Aorta (tissue), 5 donors: ENCODE measurements at regions of chr5 and their contacts with region 1.

Region 1: DNA sequence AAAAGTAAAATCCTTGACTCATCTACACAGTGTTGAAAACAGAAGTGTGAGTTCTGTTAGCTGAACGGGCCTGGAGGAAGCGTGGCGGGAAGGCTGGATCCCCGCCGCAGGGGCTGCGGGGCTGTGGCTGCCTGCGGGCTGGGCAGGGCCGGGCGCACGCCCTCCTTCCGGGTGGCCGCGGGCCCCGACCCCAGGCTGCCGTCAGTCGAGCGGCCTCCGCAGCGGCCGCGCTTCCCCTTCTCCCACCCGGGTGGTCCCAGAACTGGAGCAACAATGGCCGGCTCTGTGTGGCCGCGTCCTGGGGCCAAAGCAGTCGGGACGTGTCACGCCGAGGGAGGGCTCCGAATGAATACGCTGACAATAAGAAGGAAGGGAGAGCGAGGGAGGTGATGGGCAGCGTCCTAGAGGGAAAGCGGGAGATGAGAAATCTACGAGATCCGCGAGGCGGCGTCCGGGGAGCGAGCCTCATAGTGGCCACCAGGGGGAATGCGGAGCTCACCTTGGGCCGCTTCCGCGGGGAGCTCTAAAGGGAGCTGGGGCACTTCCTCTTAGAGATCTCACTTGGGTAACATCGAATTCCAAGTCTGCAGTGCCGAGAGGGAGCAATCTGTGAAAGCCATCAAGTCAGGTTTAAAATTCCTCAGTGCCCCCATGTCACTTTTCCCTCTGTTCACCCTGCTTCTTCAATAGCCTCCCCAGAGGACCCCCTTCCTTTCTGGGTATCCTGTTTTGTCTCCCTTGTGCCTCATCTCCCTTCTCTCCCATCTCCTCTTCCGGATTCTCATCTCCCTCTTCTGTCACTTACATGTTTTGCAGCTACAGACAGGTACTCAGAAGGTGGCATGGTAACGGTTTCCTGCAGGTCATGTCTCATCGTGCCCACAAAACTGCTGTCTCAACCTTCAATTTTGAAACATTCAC is 83.9 kb downstream of the SLC1A3 start:
- DNase-seq: peak; percentile 88 to 94
- ATAC-seq: peak; percentile 81
- H3K4me3 ChIP-seq: peak overlapping the region; percentile 6 to 92
- H3K27ac ChIP-seq: peak overlapping the region in 1 of 2 donors; percentile 56
- H3K4me1 ChIP-seq: no peaks in the 10 kb centered on the region
- H3K27me3 ChIP-seq: no peaks in the 10 kb centered on the region

Region 2: GRCh38 chr5:36151434-36152323 is 538.6 kb before region 1 on chr5 and contains the starts of genes LMBRD2 and SKP2:
- intact Hi-C with region 1: loop called in 1 of 2 experiments (anchors 10 kb)
- DNase-seq: peak; percentile 99
- ATAC-seq: peak; percentile 100
- H3K4me3 ChIP-seq: peak within 1 kb of the TSS; percentile 61 to 91
- H3K27ac ChIP-seq: peak within 1 kb of the TSS in 1 of 2 donors; percentile 47
- H3K4me1 ChIP-seq: peaks cover 0 to 4% of the 10 kb centered on the region in 2 donors
- H3K27me3 ChIP-seq: no peaks in the 10 kb centered on the region
- total RNA-seq, gene LMBRD2: 9.8 to 16.3 TPM
- total RNA-seq, gene SKP2: 8.8 to 16.1 TPM

Region 3: DNA sequence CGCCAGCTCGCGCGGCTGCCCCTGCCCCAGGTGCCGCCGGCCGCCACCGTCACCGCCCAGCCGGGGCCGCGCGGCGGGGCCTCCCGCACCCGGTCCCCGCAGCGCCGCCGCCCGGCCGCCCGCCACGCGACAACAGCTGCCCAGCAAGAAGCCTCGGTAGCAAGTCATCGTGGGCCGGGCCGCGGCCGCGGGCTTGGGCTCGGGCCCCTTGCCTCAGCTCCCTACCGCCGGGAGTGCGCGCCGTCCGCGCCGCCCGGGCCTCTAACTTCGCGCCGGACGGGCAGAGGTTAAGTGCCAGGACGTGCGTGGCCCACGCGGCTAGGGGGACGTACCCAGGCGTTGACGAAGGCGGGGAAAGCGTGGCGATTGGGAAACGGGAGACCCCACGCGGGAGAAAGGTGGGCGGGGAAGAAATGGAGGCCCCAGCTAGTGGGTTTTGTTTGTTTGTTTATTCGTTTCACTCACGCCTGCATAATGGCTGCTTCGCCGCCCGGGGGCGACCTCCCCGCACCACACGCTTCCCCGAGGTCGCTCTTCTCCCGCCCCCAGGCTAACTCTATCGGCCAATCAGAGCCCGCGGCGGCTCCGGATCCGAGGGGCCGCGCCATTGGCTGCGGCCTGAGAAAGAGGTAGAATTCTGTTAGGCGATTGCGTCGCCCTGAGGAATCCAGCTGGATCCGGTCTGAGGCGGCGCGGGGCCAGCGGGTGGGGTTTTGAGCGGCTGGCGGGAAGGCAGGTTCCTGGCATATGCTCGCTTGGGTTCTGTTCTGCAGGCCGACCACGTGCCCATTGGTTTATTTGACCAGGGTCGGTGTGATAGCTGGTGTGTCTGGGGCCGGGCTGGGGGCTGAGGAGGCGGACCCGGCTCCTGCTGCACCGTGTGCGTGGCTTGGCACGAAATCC is 448.4 kb before region 1 on chr5 and contains the start of gene NADK2:
- intact Hi-C with region 1: loop called in 1 of 2 experiments (anchors 10 kb)
- DNase-seq: peak; percentile 98
- ATAC-seq: peak; percentile 96
- H3K4me3 ChIP-seq: peak within 1 kb of the TSS; percentile 65 to 68
- H3K27ac ChIP-seq: peak within 1 kb of the TSS; percentile 79 to 81
- H3K4me1 ChIP-seq: peaks cover 2 to 8% of the 10 kb centered on the region in 2 donors
- H3K27me3 ChIP-seq: no peaks in the 10 kb centered on the region
- total RNA-seq, gene NADK2: 26.6 to 32.0 TPM

Region 4: GRCh38 chr5:36414869-36415282 is 275.4 kb before region 1 on chr5:
- intact Hi-C with region 1: loop called (anchors 1 to 5 kb)
- DNase-seq: no peak
- ATAC-seq: no peak
- H3K4me3 ChIP-seq: no peak overlapping the region
- H3K27ac ChIP-seq: no peak overlapping the region
- H3K4me1 ChIP-seq: no peaks in the 10 kb centered on the region
- H3K27me3 ChIP-seq: no peaks in the 10 kb centered on the region

Region 5: GRCh38 chr5:36507332-36507952 is 182.9 kb before region 1 on chr5:
- intact Hi-C with region 1: loop called (anchors 2 to 5 kb)
- DNase-seq: peak; percentile 89 to 92
- ATAC-seq: peak; percentile 80
- H3K4me3 ChIP-seq: no peak overlapping the region
- H3K27ac ChIP-seq: no peak overlapping the region
- H3K4me1 ChIP-seq: no peaks in the 10 kb centered on the region
- H3K27me3 ChIP-seq: no peaks in the 10 kb centered on the region